ENCODE measurements at regions of chr19 and their contacts with region 1.

Region 1: GRCh38 chr19:5031231-5032100 is 62.6 kb downstream of the KDM4B start:
- DNase-seq: peak; percentile 66
- H3K4me3 Mint-ChIP-seq: no peak overlapping the region
- H3K27ac Mint-ChIP-seq: no peak overlapping the region
- H3K4me1 Mint-ChIP-seq: no peaks in the 10 kb centered on the region
- H3K27me3 Mint-ChIP-seq: no peaks in the 10 kb centered on the region

Region 2: DNA sequence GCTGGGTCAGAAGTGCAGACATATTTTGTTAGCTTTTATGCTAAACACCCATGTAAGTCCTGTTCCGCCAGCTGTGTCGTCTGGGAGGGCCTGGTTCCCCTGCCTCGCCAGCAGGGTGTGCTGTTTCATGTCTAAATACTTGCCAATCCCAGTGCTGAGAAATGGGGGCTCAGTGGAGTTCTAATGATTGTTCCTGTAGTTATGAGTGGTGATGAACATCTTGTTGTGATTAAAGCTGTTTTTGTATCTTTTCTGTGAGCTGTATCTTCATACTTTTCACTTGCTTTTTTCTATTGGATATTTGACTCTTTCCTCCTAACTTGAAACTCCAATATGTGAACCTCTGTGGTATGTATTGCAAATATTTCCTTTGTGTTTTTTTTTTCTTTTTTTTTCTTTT is 29.9 kb before region 1 on chr19:
- intact Hi-C with region 1: loop called (anchors 2 kb)
- DNase-seq: no peak
- H3K4me3 Mint-ChIP-seq: no peak overlapping the region
- H3K27ac Mint-ChIP-seq: no peak overlapping the region
- H3K4me1 Mint-ChIP-seq: no peaks in the 10 kb centered on the region
- H3K27me3 Mint-ChIP-seq: no peaks in the 10 kb centered on the region

Region 3: DNA sequence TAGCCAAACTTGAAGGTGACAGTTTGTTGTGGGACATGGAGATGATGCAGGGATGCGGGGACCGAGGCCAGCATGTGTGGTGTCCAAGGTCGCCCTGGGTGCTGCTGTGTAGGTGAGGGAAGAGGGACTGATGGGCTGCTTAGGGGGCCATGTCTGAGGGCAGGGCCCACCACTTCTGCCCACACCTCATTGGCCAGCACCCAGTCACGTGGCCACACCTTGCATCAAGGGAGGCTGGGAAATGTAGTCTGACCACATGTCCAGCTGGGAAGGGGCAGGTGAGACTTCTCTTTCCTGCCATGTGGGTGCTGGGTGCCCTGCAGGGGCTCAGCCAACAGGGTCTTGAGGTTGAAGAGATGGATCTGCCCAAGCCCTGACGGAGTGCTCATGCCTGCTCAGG is 26.4 kb after region 1 on chr19:
- intact Hi-C with region 1: no loop called
- DNase-seq: no peak
- H3K4me3 Mint-ChIP-seq: no peak overlapping the region
- H3K27ac Mint-ChIP-seq: no peak overlapping the region
- H3K4me1 Mint-ChIP-seq: no peaks in the 10 kb centered on the region
- H3K27me3 Mint-ChIP-seq: no peaks in the 10 kb centered on the region

Measured in activated T-helper 2 cell treated with anti-CD3 and anti-CD28 coated beads, Interferon-gamma antibody, Interleukin-2, Interleukin-4, amounts not matched to agents 10 μg/mL and 5 μg/mL and 100 μg/mL, durations not matched to agents 14 hours and 24 hours and 36 hours (primary cell).